Ovary (tissue), 10 donors: ENCODE measurements at regions of chr7 and their contacts with region 1.

Region 1: GRCh38 chr7:54773472-54774399 is 14.7 kb upstream of the SEC61G start:
- DNase-seq: peak; percentile 82 to 88 (median 88)
- H3K4me3 ChIP-seq: peak overlapping the region; percentile 15
- H3K27ac ChIP-seq: no peak overlapping the region
- H3K4me1 ChIP-seq: no peaks in the 10 kb centered on the region
- H3K27me3 ChIP-seq: no peaks in the 10 kb centered on the region
- CTCF ChIP-seq: peak; percentile 64 to 78 (median 70)
- EP300 ChIP-seq: no peak
- POLR2A ChIP-seq: no peak

Region 2: DNA sequence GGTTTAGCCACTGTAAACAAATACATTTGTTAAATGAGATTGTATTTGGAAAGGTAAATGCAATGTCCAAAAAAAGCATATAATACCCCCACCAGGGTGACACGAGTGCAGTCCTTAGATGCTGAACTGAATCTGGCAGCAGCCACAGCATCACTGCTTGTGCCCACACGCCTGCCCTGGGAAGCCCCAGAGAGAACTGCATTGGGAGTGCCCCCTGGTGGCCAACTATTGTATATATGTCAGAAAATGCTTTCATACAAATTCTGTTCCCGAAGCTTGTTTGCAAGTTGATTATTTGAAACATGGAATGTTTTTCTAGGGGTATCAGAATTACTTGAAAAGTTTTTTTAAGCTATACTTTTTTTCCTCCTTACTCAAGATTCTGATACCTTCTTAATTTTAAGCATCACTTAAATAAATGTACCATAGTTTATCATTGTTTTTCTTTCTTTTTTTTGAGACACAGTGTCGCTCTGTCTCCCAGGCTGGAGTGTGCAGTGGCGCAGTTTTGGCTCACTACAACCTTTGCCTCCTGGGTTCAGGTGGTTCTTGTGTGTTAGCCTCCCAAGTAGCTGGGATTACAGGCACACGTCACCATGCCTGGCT is 641.5 kb after region 1 on chr7:
- intact Hi-C with region 1: loop called in 1 of 4 experiments (anchors 10 kb)
- DNase-seq: peak; percentile 74 to 83 (median 78)
- H3K4me3 ChIP-seq: no peak overlapping the region
- H3K27ac ChIP-seq: no peak overlapping the region
- H3K4me1 ChIP-seq: no peaks in the 10 kb centered on the region
- H3K27me3 ChIP-seq: no peaks in the 10 kb centered on the region
- CTCF ChIP-seq: peak; percentile 63 to 88 (median 65)
- EP300 ChIP-seq: no peak
- POLR2A ChIP-seq: no peak